CD4-positive, alpha-beta T cell (primary cell): ENCODE measurements at regions of chr6 and their contacts with region 1.

Region 1: GRCh38 chr6:32622545-32623401 is 14.4 kb upstream of the HLA-DQA1 start:
- DNase-seq: peak in 11 of 14 experiments; percentile 8 to 94 (median 24)
- ATAC-seq: peak; percentile 77
- H3K4me3 ChIP-seq: no peak overlapping the region
- H3K4me3 Mint-ChIP-seq: peak overlapping the region; percentile 13
- H3K27ac ChIP-seq: peak overlapping the region; percentile 49 to 73
- H3K27ac Mint-ChIP-seq: peak overlapping the region; percentile 91
- H3K4me1 ChIP-seq: peaks cover 23% of the 10 kb centered on the region
- H3K4me1 Mint-ChIP-seq: peaks cover 57% of the 10 kb centered on the region
- H3K27me3 ChIP-seq: no peaks in the 10 kb centered on the region
- H3K27me3 Mint-ChIP-seq: no peaks in the 10 kb centered on the region
- CTCF ChIP-seq: peak; percentile 45

Region 2: GRCh38 chr6:32539839-32540238 is 82.9 kb before region 1 on chr6:
- CTCF ChIA-PET with region 1: no interaction called
- POLR2A ChIA-PET with region 1: no interaction called
- intact Hi-C with region 1: no loop called
- DNase-seq: no peak
- ATAC-seq: no peak
- H3K4me3 ChIP-seq: no peak overlapping the region
- H3K4me3 Mint-ChIP-seq: no peak overlapping the region
- H3K27ac ChIP-seq: no peak overlapping the region
- H3K27ac Mint-ChIP-seq: no peak overlapping the region
- H3K4me1 ChIP-seq: no peaks in the 10 kb centered on the region
- H3K4me1 Mint-ChIP-seq: no peaks in the 10 kb centered on the region
- H3K27me3 ChIP-seq: no peaks in the 10 kb centered on the region
- H3K27me3 Mint-ChIP-seq: peaks cover 5% of the 10 kb centered on the region
- CTCF ChIP-seq: no peak

Region 3: GRCh38 chr6:32685603-32686002 is 62.8 kb after region 1 on chr6:
- CTCF ChIA-PET with region 1: no interaction called
- POLR2A ChIA-PET with region 1: interaction called, 7 read pairs
- intact Hi-C with region 1: loop called (anchors 2 to 5 kb)
- DNase-seq: peak in 7 of 14 experiments; percentile 2 to 93 (median 40)
- ATAC-seq: peak; percentile 97
- H3K4me3 ChIP-seq: no peak overlapping the region
- H3K4me3 Mint-ChIP-seq: peak overlapping the region; percentile 14
- H3K27ac ChIP-seq: no peak overlapping the region
- H3K27ac Mint-ChIP-seq: peak overlapping the region; percentile 38
- H3K4me1 ChIP-seq: no peaks in the 10 kb centered on the region
- H3K4me1 Mint-ChIP-seq: peaks cover 45% of the 10 kb centered on the region
- H3K27me3 ChIP-seq: no peaks in the 10 kb centered on the region
- H3K27me3 Mint-ChIP-seq: no peaks in the 10 kb centered on the region
- CTCF ChIP-seq: no peak

Region 4: DNA sequence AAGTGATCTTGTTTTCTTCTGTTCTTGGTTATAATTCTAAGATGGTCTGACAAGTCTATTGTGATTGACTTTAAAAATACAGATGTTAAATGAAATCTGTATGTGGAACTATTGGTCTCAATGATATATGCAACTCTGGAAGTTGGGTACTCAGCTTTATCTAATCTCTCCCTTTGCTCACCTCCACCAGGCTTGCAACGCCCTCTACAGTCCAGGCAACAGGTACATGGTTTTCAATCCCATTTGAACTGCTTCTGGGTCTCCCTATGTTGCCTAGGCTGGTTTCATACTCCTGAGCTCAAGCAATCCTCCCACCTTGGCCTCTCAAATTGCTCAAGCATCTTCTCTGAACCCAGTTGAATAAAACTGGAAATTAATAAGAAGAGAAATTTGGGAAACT is 69.2 kb after region 1 on chr6:
- CTCF ChIA-PET with region 1: interaction called, 14 read pairs
- POLR2A ChIA-PET with region 1: interaction called, 8 read pairs
- intact Hi-C with region 1: loop called (anchors 1 to 2 kb)
- DNase-seq: peak in 13 of 14 experiments; percentile 32 to 80 (median 48)
- ATAC-seq: peak; percentile 94
- H3K4me3 ChIP-seq: no peak overlapping the region
- H3K4me3 Mint-ChIP-seq: no peak overlapping the region
- H3K27ac ChIP-seq: no peak overlapping the region
- H3K27ac Mint-ChIP-seq: no peak overlapping the region
- H3K4me1 ChIP-seq: no peaks in the 10 kb centered on the region
- H3K4me1 Mint-ChIP-seq: peaks cover 20% of the 10 kb centered on the region
- H3K27me3 ChIP-seq: no peaks in the 10 kb centered on the region
- H3K27me3 Mint-ChIP-seq: peaks cover 43% of the 10 kb centered on the region
- CTCF ChIP-seq: peak; percentile 84